GM13976 (cell line): ENCODE measurements at regions of chr9 and their contacts with region 1.

Region 1: GRCh38 chr9:107465467-107466451 is 23.8 kb downstream of the KLF4 start:
- DNase-seq: peak; percentile 79
- CTCF ChIP-seq: peak; percentile 50

Region 2: GRCh38 chr9:106795031-106795430 is 670.7 kb before region 1 on chr9:
- in situ Hi-C with region 1: no loop called
- DNase-seq: no peak
- CTCF ChIP-seq: no peak

Region 3: GRCh38 chr9:107282753-107283625 is 182.8 kb before region 1 on chr9 and contains the start of gene RAD23B:
- in situ Hi-C with region 1: no loop called
- DNase-seq: peak; percentile 97
- CTCF ChIP-seq: no peak

Region 4: GRCh38 chr9:108191065-108191464 is 725.3 kb after region 1 on chr9:
- in situ Hi-C with region 1: no loop called
- DNase-seq: no peak
- CTCF ChIP-seq: no peak

Region 5: GRCh38 chr9:108761655-108762347 is 1296.0 kb after region 1 on chr9:
- in situ Hi-C with region 1: loop called (anchors 25 kb)
- DNase-seq: peak; percentile 70
- CTCF ChIP-seq: peak; percentile 70